ENCODE measurements at regions of chr12 and their contacts with region 1.

Region 1: DNA sequence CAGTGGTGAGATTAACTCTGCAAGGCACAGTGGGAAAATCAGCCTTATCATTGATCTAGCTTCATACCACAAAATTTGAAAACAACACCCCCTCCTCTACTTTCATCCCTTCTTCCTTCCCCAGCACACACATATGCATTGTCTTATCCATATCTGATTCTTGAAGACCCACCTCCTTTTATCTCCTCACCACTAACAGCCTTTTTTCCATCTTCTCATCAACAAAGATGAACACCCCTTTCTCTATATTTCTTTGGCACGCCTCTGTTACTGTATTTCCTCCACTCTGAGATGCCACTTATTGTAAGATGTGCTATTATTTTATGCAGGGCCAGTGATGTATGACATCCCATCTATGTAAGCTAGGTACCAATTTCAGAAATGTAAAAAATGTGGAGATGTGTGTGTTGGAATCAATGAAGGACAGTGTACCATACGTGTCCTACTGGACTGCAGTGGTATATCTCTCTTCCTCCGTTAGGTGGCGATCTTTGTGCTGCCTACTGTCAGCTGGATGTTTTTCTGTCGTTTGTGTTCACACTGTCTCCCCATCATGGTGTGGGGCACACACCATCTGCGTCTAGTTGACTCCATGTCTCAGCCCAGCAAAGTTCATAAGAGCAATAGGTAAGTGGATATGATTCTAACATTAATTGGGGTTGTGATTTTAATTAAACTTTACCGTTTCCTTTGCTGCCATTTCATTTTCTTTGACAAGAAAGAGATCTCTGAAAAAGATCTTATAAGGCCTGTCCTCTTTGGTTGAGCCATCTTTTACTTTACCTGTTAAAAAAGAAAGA is 24.0 kb downstream of the CCDC38 start:
- DNase-seq: no peak
- H3K4me3 ChIP-seq: no peak overlapping the region
- CTCF ChIP-seq: peak; percentile 75

Region 2: DNA sequence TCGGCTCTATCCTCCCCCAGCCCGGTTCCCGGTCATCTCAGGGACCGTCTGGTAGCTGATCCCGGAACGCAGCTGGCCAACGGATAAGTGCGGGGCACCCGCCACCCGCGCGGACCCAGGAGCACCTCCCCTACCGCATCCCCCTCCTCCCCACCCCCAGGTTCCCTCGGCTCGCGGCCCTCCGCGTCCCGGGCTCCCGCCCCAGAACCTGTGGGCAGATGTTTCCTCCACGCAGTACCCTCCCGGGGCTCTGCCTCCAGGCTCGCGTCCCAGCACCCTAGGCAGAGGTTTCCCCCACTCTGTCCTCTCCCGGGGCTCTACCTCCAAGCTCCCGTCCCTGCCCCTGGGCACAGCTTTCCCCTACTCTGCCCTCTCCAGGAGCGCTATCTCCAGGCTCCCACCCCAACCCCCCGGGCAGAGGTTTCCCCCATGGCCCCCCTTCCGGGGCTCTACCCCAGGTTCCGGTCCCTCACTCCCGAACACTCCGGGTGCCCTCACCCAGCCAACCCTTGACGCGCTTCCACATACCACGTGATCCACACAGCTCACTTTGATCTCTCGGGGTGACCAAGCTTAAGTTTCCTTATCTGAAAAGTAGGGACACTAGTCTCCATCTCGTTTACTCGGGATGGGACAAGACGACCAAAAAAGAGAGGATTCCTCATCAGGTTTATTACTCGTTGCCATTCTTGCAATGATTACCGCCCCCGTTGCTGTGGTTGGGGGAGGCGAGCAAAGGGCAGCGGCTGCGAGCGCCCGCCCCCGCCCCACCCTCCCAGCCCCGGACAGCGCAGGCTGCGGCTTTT is 24.3 kb after region 1 on chr12 and contains the start of gene CCDC38:
- CTCF ChIA-PET with region 1: interaction called, 37 read pairs
- POLR2A ChIA-PET with region 1: no interaction called
- DNase-seq: no peak
- H3K4me3 ChIP-seq: peak within 1 kb of the TSS; percentile 71
- CTCF ChIP-seq: no peak

Region 3: GRCh38 chr12:95989504-95990123 is 71.2 kb after region 1 on chr12:
- CTCF ChIA-PET with region 1: interaction called, 10 read pairs
- POLR2A ChIA-PET with region 1: no interaction called
- DNase-seq: no peak
- H3K4me3 ChIP-seq: no peak overlapping the region
- CTCF ChIP-seq: no peak